AG04449 (cell line): ENCODE measurements at regions of chr17 and their contacts with region 1.

Region 1: GRCh38 chr17:45098869-45099616 is 33.3 kb downstream of the PLCD3 start:
- DNase-seq: no peak
- H3K4me3 ChIP-seq: no peak overlapping the region
- CTCF ChIP-seq: peak; percentile 89

Region 2: DNA sequence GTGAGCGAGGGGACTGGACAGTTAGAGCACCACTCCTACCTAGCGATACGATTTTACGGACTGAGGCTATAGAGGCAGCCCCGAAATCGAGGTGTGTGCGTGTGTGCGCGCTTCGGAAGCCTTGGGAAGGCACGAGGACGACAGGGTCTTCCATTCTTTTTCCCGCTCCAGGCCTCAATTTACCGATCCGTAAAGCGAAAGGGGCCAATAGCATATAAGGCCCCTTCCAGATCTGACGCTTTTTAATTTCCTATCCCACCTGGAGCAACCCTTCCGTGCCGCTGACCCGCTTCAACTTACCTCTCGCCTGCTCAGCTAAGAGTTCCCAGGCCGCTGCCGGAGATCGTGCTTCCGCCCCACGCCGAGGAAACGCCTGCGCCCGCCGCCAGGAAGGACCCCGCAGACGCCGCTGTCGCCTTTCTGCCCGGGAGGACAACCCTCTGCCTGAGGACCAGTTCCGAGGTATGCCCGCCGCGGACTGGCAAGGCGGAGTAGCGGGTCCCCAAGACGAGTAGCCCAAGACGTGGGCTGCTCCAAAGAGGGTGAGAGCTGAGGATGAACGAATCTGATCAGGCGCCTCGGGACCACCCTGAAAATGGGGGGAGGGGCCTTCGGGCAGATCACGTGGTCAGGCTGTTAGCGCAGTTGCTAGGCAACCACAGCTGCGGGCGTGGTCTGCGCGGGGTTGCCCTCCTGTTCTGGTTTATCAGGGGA is 199.8 kb before region 1 on chr17 and contains the start of gene EFTUD2:
- CTCF ChIA-PET with region 1: interaction called, 14 read pairs
- POLR2A ChIA-PET with region 1: no interaction called
- DNase-seq: no peak
- H3K4me3 ChIP-seq: peak within 1 kb of the TSS; percentile 100
- CTCF ChIP-seq: no peak

Region 3: GRCh38 chr17:45038728-45039634 is 60.1 kb before region 1 on chr17:
- CTCF ChIA-PET with region 1: interaction called, 10 read pairs
- POLR2A ChIA-PET with region 1: interaction called, 3 read pairs
- DNase-seq: no peak
- H3K4me3 ChIP-seq: no peak overlapping the region
- CTCF ChIP-seq: no peak

Region 4: GRCh38 chr17:45063198-45063597 is 35.8 kb before region 1 on chr17:
- CTCF ChIA-PET with region 1: interaction called, 72 read pairs
- POLR2A ChIA-PET with region 1: interaction called, 4 read pairs
- DNase-seq: no peak
- H3K4me3 ChIP-seq: no peak overlapping the region
- CTCF ChIP-seq: no peak

Region 5: GRCh38 chr17:45087504-45087975 is 11.5 kb before region 1 on chr17:
- CTCF ChIA-PET with region 1: interaction called, 107 read pairs
- POLR2A ChIA-PET with region 1: no interaction called
- DNase-seq: no peak
- H3K4me3 ChIP-seq: no peak overlapping the region
- CTCF ChIP-seq: no peak

Region 6: GRCh38 chr17:45123930-45124796 is 25.1 kb after region 1 on chr17:
- CTCF ChIA-PET with region 1: interaction called, 123 read pairs
- POLR2A ChIA-PET with region 1: no interaction called
- DNase-seq: no peak
- H3K4me3 ChIP-seq: no peak overlapping the region
- CTCF ChIP-seq: no peak